ENCODE measurements at regions of chr1 and their contacts with region 1.

Region 1: GRCh38 chr1:231724876-231725724 is 98.5 kb downstream of the DISC1 start:
- DNase-seq: peak; percentile 90
- H3K4me3 Mint-ChIP-seq: no peak overlapping the region
- H3K27ac Mint-ChIP-seq: no peak overlapping the region
- H3K4me1 Mint-ChIP-seq: no peaks in the 10 kb centered on the region
- H3K27me3 Mint-ChIP-seq: no peaks in the 10 kb centered on the region
- CTCF ChIP-seq: peak; percentile 79

Region 2: GRCh38 chr1:231395076-231395995 is 329.8 kb before region 1 on chr1:
- CTCF ChIA-PET with region 1: no interaction called
- POLR2A ChIA-PET with region 1: no interaction called
- intact Hi-C with region 1: no loop called
- DNase-seq: peak; percentile 88
- H3K4me3 Mint-ChIP-seq: peak overlapping the region; percentile 52
- H3K27ac Mint-ChIP-seq: peak overlapping the region; percentile 79
- H3K4me1 Mint-ChIP-seq: peaks cover 72% of the 10 kb centered on the region
- H3K27me3 Mint-ChIP-seq: no peaks in the 10 kb centered on the region
- CTCF ChIP-seq: no peak

Region 3: GRCh38 chr1:231702801-231703395 is 22.2 kb before region 1 on chr1:
- CTCF ChIA-PET with region 1: interaction called, 11 read pairs
- POLR2A ChIA-PET with region 1: no interaction called
- intact Hi-C with region 1: no loop called
- DNase-seq: no peak
- H3K4me3 Mint-ChIP-seq: no peak overlapping the region
- H3K27ac Mint-ChIP-seq: no peak overlapping the region
- H3K4me1 Mint-ChIP-seq: peaks cover 26% of the 10 kb centered on the region
- H3K27me3 Mint-ChIP-seq: peaks cover 22% of the 10 kb centered on the region
- CTCF ChIP-seq: no peak

Region 4: GRCh38 chr1:231735411-231735810 is 10.3 kb after region 1 on chr1:
- CTCF ChIA-PET with region 1: interaction called, 16 read pairs
- POLR2A ChIA-PET with region 1: interaction called, 3 read pairs
- intact Hi-C with region 1: no loop called
- DNase-seq: no peak
- H3K4me3 Mint-ChIP-seq: no peak overlapping the region
- H3K27ac Mint-ChIP-seq: no peak overlapping the region
- H3K4me1 Mint-ChIP-seq: no peaks in the 10 kb centered on the region
- H3K27me3 Mint-ChIP-seq: no peaks in the 10 kb centered on the region
- CTCF ChIP-seq: no peak

Region 5: DNA sequence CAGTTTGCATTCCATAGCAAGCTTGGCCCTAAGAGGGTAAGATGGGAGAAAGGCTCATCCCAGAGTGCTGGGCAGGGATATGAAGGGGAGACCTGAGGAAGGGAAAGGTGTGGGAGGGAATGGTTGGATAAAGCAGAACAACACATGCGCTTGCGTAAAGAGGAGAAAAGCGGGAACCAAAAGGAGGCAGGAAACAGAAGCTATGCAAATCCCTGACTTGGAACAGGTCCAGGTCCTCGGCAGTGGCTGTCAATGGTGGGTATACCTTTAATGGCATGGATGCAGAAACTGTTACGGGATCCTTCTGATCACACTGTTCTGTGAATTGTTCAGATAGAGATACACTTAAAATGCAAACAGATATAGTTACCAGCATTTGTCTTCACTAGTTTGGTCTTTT is 449.2 kb after region 1 on chr1:
- CTCF ChIA-PET with region 1: no interaction called
- POLR2A ChIA-PET with region 1: no interaction called
- intact Hi-C with region 1: loop called (anchors 1 kb)
- DNase-seq: no peak
- H3K4me3 Mint-ChIP-seq: no peak overlapping the region
- H3K27ac Mint-ChIP-seq: no peak overlapping the region
- H3K4me1 Mint-ChIP-seq: no peaks in the 10 kb centered on the region
- H3K27me3 Mint-ChIP-seq: no peaks in the 10 kb centered on the region
- CTCF ChIP-seq: no peak

Region 6: DNA sequence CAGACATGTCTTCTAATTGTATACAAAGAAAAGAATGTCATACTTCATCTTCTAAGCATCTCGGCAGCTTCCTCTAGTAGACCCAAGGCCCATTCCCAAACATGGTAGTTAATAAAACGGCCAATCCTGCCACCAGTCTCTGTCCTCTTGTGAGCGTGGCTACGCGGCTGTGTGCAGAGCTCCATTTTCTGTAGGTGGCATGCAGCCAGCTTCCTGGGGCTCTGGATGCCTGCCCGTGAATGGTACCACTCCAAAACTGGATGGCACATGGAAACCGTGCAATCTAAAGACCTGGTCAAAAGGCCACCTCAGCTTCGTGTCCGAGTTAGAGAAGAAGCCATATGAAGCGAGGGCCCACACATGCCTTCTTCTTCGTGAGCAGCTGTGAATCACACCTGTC is 794.1 kb after region 1 on chr1:
- CTCF ChIA-PET with region 1: no interaction called
- POLR2A ChIA-PET with region 1: no interaction called
- intact Hi-C with region 1: loop called (anchors 10 kb)
- DNase-seq: no peak
- H3K4me3 Mint-ChIP-seq: no peak overlapping the region
- H3K27ac Mint-ChIP-seq: no peak overlapping the region
- H3K4me1 Mint-ChIP-seq: peaks cover 18% of the 10 kb centered on the region
- H3K27me3 Mint-ChIP-seq: no peaks in the 10 kb centered on the region
- CTCF ChIP-seq: no peak